ENCODE measurements at regions of chr11 and their contacts with region 1.

Region 1: GRCh38 chr11:59999691-60000090 is 17.3 kb upstream of the OOSP4B start:
- DNase-seq: no peak
- ATAC-seq: no peak
- H3K4me3 Mint-ChIP-seq: no peak overlapping the region
- H3K27ac Mint-ChIP-seq: no peak overlapping the region
- H3K4me1 Mint-ChIP-seq: no peaks in the 10 kb centered on the region
- H3K27me3 Mint-ChIP-seq: peaks cover 19% of the 10 kb centered on the region
- CTCF ChIP-seq: no peak

Region 2: DNA sequence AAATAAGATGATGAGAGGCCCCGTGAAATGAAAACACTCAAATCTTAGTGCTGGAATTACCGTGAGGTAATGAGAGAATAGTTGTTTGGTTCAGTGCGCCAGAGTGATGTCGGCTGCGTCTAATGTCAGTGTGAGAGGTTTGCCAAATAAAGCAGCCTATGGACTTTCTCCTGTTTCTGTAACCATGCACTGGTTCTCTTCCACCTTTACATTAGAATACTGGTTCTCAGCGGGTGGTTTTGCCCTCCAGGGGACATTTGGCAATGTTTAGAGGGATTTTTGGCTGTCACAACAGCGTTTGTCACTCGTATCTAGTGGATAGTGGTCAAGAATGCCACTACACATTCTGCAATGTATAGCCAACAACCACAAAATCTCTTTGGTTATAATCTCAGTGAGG is 18.4 kb after region 1 on chr11:
- CTCF ChIA-PET with region 1: no interaction called
- POLR2A ChIA-PET with region 1: interaction called, 11 read pairs
- intact Hi-C with region 1: no loop called
- DNase-seq: no peak
- ATAC-seq: no peak
- H3K4me3 Mint-ChIP-seq: no peak overlapping the region
- H3K27ac Mint-ChIP-seq: no peak overlapping the region
- H3K4me1 Mint-ChIP-seq: no peaks in the 10 kb centered on the region
- H3K27me3 Mint-ChIP-seq: peaks cover 7% of the 10 kb centered on the region
- CTCF ChIP-seq: no peak

Region 3: GRCh38 chr11:60040109-60040508 is 40.4 kb after region 1 on chr11 and contains the start of gene OOSP2:
- CTCF ChIA-PET with region 1: no interaction called
- POLR2A ChIA-PET with region 1: no interaction called
- intact Hi-C with region 1: no loop called
- DNase-seq: no peak
- ATAC-seq: no peak
- H3K4me3 Mint-ChIP-seq: no peak within 1 kb of the TSS
- H3K27ac Mint-ChIP-seq: no peak within 1 kb of the TSS
- H3K4me1 Mint-ChIP-seq: no peaks in the 10 kb centered on the region
- H3K27me3 Mint-ChIP-seq: peaks cover 2% of the 10 kb centered on the region
- CTCF ChIP-seq: no peak
- total RNA-seq, gene OOSP2: not detected in 2 replicates